Ascending aorta (tissue), 2 donors: ENCODE measurements at regions of chr6 and their contacts with region 1.

Region 1: DNA sequence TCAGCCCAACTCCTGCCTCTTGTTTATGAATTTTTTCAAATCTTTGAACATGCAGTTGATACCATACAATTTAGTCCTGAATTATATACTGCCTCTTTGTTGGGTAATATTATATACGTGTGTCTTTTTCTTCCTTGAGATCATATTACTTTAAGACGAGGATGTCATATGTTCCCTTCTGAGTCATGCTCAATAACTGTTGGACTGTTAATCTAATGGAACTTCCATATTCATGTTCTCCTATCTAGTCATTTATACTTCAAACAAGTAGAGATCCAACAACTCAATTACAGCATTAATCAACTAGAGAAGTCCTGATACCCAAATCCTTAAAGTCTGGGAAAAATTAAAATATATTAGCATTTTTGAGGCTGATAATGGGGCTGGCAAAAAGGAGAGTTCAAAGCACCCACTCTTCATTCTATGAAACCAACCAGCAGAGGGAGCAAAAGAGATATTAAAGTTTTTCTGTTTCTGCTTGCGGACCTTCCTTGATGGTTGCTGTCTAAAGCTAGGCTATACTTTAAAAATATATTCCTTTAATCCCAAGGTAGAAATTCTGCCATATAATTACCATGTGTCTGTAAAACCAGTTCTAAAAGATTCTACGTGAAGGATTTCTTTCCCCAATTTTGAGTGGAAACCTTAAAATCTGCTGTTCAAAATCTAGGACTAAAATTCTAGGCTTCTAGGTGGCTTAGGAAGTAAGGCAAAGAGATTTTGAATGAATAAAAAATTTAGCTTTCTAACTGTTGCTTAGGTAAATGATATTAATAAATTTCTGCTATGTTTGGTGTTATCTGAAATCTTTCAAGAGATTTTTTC is 498.9 kb downstream of the BCKDHB start:
- DNase-seq: no peak
- H3K4me3 ChIP-seq: no peak overlapping the region
- H3K27ac ChIP-seq: no peak overlapping the region
- H3K4me1 ChIP-seq: peaks cover 0 to 14% of the 10 kb centered on the region in 2 donors
- H3K27me3 ChIP-seq: no peaks in the 10 kb centered on the region
- CTCF ChIP-seq: peak; percentile 8 to 62 (median 43)

Region 2: DNA sequence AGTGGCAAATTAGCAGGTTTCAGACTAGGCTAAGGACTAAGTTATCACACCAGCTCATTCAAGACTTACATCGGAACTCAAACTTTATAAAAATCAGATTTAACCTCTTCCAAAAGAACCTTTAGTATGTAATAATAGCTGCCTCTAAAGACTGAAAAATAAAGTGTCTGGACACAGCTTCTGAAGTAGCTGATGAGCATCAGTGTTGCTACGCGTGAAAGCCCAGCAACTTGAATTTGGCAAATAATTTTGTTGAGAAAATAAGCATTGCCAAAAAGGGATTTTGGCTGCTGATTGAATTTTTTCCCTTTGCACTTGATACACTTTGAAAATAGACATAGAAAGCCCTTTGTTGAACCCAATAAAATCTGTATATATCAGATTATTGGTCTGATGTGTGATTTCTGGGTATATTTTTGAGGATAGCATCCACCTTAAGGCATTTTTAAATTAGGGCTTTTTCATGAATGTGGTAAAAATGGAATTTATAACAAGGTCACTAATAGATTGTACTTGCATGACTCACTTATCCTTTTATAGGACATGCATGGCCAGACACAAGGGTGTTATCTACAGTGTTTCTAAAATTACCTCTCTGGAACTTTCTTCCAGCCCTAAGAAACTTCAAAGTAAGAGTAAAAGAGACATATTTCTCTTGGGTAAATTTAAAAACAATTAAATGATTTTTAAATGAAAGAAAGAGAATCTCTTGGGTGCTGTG is 796.8 kb after region 1 on chr6:
- intact Hi-C with region 1: loop called (anchors 5 kb)
- DNase-seq: no peak
- H3K4me3 ChIP-seq: peak overlapping the region in 1 of 2 donors; percentile 6
- H3K27ac ChIP-seq: peak overlapping the region; percentile 76 to 79
- H3K4me1 ChIP-seq: peaks cover 0 to 15% of the 10 kb centered on the region in 2 donors
- H3K27me3 ChIP-seq: no peaks in the 10 kb centered on the region
- CTCF ChIP-seq: no peak

Region 3: DNA sequence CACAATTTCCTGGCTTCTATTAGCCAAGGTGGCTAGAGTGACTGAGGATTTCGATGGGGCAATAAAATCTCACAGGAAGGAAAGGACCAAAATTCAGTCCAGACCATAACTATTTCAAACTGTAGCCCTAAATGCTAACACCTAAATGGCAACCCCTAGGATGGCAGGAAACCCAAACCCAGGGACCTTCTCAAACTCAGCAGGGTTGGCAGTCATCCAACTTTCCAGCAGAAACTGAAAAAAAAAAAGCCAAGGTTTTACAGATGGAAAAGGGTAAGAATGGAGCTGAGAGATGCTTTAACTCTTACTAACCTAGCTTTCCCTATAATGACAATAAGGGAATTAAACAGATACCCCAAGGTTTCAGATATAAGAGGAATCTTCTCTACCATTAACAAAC is 1631.6 kb after region 1 on chr6:
- intact Hi-C with region 1: no loop called
- DNase-seq: no peak
- H3K4me3 ChIP-seq: no peak overlapping the region
- H3K27ac ChIP-seq: no peak overlapping the region
- H3K4me1 ChIP-seq: no peaks in the 10 kb centered on the region
- H3K27me3 ChIP-seq: no peaks in the 10 kb centered on the region
- CTCF ChIP-seq: no peak